Sigmoid colon (tissue), 7 donors: ENCODE measurements at regions of chr13 and their contacts with region 1.

Region 1: DNA sequence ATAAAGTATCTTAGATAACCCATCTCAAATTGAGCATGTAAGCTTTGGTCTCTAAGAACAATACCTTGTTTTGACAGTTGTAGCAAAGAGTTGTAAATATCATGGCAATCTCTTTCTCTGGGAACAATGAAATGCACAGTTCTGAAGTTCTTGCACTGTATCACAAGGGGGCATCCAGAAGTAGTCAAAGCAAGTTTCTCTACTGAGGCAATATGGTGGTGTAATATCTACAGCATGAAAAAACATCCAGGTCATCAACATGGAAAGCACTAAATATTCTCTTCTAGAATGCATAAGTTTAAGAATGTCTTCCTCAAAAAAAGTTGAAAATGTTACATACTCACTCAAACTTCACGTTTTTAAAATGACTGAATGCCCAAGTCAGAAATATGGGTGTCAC is 19.6 kb downstream of the MTMR6 start:
- DNase-seq: no peak
- H3K4me3 ChIP-seq: no peak overlapping the region
- H3K27ac ChIP-seq: no peak overlapping the region
- H3K4me1 ChIP-seq: no peaks in the 10 kb centered on the region
- H3K27me3 ChIP-seq: no peaks in the 10 kb centered on the region
- CTCF ChIP-seq: no peak
- EP300 ChIP-seq: no peak
- POLR2A ChIP-seq: no peak

Region 2: DNA sequence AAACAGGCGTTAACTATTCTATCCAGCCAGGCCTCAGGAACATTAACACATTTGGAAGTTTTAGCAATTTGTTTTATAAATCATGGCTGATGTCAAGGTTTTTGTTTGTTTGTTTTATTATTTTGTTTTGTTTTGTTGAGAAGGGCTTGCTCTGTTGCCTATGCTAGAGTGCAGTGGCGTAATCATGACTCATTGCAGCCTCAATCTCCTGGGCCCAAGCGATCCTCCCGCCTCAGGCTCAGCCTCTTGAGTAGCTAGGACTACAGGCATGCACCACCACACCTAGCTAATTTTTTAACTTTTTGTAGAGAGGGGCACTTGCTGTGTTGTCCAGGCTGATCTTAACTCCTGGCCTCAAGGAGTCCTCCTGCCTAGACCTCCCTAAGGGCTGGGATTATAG is 62.0 kb after region 1 on chr13:
- intact Hi-C with region 1: loop called (anchors 10 kb)
- DNase-seq: no peak
- H3K4me3 ChIP-seq: no peak overlapping the region
- H3K27ac ChIP-seq: no peak overlapping the region
- H3K4me1 ChIP-seq: no peaks in the 10 kb centered on the region
- H3K27me3 ChIP-seq: no peaks in the 10 kb centered on the region
- CTCF ChIP-seq: no peak
- EP300 ChIP-seq: no peak
- POLR2A ChIP-seq: no peak